ENCODE measurements at regions of chr4 and their contacts with region 1.

Region 1: DNA sequence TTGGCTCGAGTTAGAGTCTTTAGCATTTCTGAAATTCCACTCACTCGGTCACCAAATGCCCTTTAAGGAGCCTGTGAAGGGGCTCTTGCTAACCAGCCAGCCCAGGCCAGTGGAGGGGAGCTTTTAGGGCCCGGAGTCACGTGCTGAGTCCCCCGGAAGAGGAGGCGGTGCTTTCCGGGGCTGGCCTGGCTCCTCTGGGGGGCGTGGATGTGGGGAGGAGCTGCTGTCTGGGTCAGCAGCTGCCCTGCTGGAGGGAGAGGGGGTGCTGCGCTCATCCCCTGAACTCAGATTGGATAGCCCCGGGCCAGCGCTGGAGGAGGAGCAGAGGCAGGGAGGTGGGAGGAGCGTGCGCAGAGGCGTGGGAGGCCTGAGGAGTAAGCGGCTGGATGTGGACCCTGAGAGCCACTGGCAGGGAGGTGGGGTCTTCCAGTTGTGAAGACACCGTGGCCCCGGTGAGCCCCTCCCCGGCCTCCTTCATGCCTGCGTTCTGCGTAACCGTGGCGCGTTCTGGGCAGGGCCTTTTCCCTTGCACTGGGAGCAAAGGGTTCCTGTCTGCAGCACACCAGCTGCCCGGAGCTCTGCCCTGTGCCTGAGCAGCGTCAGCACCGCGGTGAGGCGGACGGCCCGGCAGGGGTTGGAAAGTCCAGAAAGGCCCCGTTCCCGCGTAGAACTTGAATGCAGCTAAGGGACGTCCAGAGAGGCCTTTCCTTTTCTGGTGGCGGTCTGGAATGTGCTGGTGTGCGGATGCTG is 19.7 kb downstream of the MAEA start:
- DNase-seq: peak; percentile 71 to 95
- H3K4me3 ChIP-seq: peak overlapping the region; percentile 40 to 60
- H3K27ac ChIP-seq: peak overlapping the region; percentile 74 to 76
- H3K4me1 ChIP-seq: peaks cover 5 to 23% of the 10 kb centered on the region in 2 donors
- H3K27me3 ChIP-seq: no peaks in the 10 kb centered on the region
- CTCF ChIP-seq: no peak

Region 2: GRCh38 chr4:1289207-1290164 is 19.9 kb before region 1 on chr4 and contains the start of gene MAEA:
- intact Hi-C with region 1: loop called (anchors 1 kb)
- DNase-seq: peak; percentile 85 to 98
- H3K4me3 ChIP-seq: peak within 1 kb of the TSS; percentile 86 to 96
- H3K27ac ChIP-seq: peak within 1 kb of the TSS; percentile 67 to 77
- H3K4me1 ChIP-seq: peaks cover 13 to 27% of the 10 kb centered on the region in 2 donors
- H3K27me3 ChIP-seq: no peaks in the 10 kb centered on the region
- CTCF ChIP-seq: no peak
- total RNA-seq, gene MAEA: 56.3 TPM

Region 3: DNA sequence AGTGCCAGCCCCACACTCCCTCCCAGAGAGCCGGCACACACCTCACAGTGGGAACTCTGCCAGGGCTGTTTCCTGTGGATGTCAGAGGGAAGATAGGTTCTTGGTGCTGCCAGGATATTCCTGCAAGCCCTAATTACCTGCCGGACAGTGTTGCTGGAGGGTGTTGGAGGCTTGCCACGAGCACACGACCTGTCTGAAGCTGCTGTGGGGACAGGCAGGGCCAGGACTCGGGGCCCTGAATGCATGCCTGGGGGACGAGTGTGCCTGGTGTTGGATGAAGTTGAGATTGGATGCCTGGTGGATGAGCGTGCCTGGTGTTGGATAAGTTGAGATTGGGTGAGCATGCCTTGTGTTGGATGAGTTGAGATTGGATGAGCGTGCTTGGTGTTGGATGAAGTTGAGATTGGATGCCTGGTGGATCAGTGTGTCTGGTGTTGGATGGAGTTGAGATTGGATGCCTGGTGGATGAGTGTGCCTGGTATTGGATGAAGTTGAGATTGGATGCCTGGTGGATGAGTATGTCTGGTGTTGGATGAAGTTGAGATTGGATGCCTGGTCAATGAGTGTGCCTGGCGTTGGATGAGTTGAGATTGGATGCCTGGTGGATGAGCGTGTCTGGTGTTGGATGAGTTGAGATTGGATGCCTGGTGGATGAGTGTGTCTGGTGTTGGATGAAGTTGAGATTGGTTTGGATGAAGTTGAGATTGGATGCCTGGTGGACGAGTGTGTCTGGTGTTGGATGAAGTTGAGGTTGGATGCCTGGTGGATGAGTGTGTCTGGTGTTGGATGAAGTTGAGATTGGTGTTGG is 14.4 kb after region 1 on chr4:
- intact Hi-C with region 1: loop called (anchors 1 kb)
- DNase-seq: peak in 1 of 2 donors; percentile 77
- H3K4me3 ChIP-seq: no peak overlapping the region
- H3K27ac ChIP-seq: peak overlapping the region; percentile 56 to 73
- H3K4me1 ChIP-seq: peaks cover 0 to 8% of the 10 kb centered on the region in 2 donors
- H3K27me3 ChIP-seq: no peaks in the 10 kb centered on the region
- CTCF ChIP-seq: no peak